MCF 10A (cell line): ENCODE measurements at regions of chr4 and their contacts with region 1.

Region 1: GRCh38 chr4:102868781-102869568 is at the start of gene CISD2:
- DNase-seq: peak; percentile 95
- H3K4me3 Mint-ChIP-seq: peak within 1 kb of the TSS; percentile 98
- H3K27ac Mint-ChIP-seq: peak within 1 kb of the TSS; percentile 98
- H3K4me1 Mint-ChIP-seq: peaks cover 21% of the 10 kb centered on the region
- H3K27me3 Mint-ChIP-seq: no peaks in the 10 kb centered on the region
- CTCF ChIP-seq: no peak
- total RNA-seq, gene CISD2: 35.5 and 35.8 TPM in 2 replicates

Region 2: GRCh38 chr4:102815981-102816380 is 53.0 kb before region 1 on chr4:
- CTCF ChIA-PET with region 1: interaction called, 5 read pairs
- POLR2A ChIA-PET with region 1: interaction called, 34 read pairs
- intact Hi-C with region 1: no loop called
- DNase-seq: peak; percentile 51
- H3K4me3 Mint-ChIP-seq: no peak overlapping the region
- H3K27ac Mint-ChIP-seq: peak overlapping the region; percentile 29
- H3K4me1 Mint-ChIP-seq: peaks cover 57% of the 10 kb centered on the region
- H3K27me3 Mint-ChIP-seq: no peaks in the 10 kb centered on the region
- CTCF ChIP-seq: no peak

Region 3: GRCh38 chr4:102858828-102859464 is 10.0 kb before region 1 on chr4:
- CTCF ChIA-PET with region 1: no interaction called
- POLR2A ChIA-PET with region 1: interaction called, 11 read pairs
- intact Hi-C with region 1: no loop called
- DNase-seq: no peak
- H3K4me3 Mint-ChIP-seq: no peak overlapping the region
- H3K27ac Mint-ChIP-seq: no peak overlapping the region
- H3K4me1 Mint-ChIP-seq: no peaks in the 10 kb centered on the region
- H3K27me3 Mint-ChIP-seq: no peaks in the 10 kb centered on the region
- CTCF ChIP-seq: no peak

Region 4: DNA sequence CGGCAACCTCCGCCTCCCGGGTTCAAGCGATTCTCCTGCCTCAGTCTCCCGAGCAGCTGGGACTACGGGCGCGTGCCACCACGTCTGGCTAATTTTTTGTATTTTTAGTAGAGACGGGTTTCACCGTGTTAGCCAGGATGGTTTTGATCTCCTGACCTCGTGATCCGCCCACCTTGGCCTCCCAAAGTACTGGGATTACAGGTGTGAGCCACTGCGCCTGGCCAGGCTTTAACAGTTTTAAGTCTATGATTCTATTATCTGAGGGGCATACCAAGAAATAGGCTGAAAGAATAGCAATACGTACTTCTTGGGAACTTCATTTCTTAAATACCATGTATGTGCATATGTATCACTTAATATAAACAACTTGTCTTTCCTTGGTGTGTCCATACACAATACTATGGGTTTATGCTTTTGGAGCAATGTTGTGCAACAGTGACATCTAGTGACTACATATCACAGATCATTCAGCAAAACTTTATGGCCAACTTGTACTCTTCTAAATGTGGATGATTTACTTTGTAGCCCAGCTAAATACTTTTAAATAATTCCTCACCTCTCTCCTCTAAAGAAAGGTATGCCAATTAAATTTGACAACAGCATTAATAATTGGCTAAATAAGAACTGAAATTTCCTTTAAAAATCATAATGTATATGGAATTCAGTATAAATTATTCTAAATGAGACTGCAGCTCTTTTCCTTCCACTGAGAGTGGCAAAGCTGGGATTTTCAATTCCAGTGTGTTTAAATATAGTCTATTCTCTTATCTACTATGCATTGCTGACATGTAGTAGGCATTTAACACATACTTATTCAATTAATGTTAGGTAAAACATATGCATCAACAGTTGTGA is 140.1 kb after region 1 on chr4:
- CTCF ChIA-PET with region 1: interaction called, 4 read pairs
- POLR2A ChIA-PET with region 1: interaction called, 5 read pairs
- intact Hi-C with region 1: loop called (anchors 5 kb)
- DNase-seq: peak; percentile 80
- H3K4me3 Mint-ChIP-seq: no peak overlapping the region
- H3K27ac Mint-ChIP-seq: no peak overlapping the region
- H3K4me1 Mint-ChIP-seq: peaks cover 26% of the 10 kb centered on the region
- H3K27me3 Mint-ChIP-seq: peaks cover 9% of the 10 kb centered on the region
- CTCF ChIP-seq: peak; percentile 75

Region 5: GRCh38 chr4:103075901-103076739 is 207.1 kb after region 1 on chr4:
- CTCF ChIA-PET with region 1: no interaction called
- POLR2A ChIA-PET with region 1: interaction called, 10 read pairs
- intact Hi-C with region 1: no loop called
- DNase-seq: peak; percentile 74
- H3K4me3 Mint-ChIP-seq: peak overlapping the region; percentile 93
- H3K27ac Mint-ChIP-seq: peak overlapping the region; percentile 92
- H3K4me1 Mint-ChIP-seq: peaks cover 20% of the 10 kb centered on the region
- H3K27me3 Mint-ChIP-seq: no peaks in the 10 kb centered on the region
- CTCF ChIP-seq: no peak